CD4-positive, alpha-beta T cell (primary cell): ENCODE measurements at regions of chr1 and their contacts with region 1.

Region 1: DNA sequence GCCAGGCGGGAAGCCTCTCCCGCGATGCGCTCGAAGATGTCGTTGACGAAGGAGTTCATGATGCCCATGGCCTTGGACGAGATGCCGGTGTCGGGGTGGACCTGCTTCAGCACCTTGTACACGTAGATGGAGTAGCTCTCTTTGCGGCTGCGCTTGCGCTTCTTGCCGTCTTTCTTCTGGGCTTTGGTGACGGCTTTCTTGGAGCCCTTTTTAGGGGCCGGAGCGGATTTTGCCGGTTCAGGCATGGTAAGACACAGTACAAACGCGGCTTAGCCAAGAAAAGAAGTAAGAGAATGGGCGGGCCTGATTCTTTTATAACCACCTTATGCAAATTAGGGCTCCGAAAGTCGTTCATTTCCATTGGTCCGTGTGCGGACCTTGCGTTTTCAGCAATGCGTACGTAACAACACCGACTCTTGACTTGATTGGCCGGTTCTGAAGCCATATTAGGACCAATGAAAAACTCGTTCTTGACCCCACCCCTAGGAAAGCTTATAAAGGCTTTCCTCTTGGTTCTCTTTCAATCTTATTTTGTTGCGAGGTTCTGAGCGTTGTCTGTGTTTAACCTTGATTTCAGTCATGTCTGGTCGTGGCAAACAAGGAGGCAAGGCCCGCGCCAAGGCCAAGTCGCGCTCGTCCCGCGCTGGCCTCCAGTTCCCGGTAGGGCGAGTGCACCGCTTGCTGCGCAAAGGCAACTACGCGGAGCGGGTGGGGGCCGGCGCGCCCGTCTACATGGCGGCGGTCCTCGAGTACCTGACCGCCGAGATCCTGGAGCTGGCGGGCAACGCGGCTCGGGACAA is 12.8 kb upstream of the BOLA1 start:
- DNase-seq: peak; percentile 67 to 98 (median 82)
- ATAC-seq: peak; percentile 65
- H3K4me3 ChIP-seq: peak overlapping the region; percentile 87
- H3K4me3 Mint-ChIP-seq: no peak overlapping the region
- H3K27ac ChIP-seq: peak overlapping the region; percentile 91 to 96
- H3K27ac Mint-ChIP-seq: no peak overlapping the region
- H3K4me1 ChIP-seq: peaks cover 31% of the 10 kb centered on the region
- H3K4me1 Mint-ChIP-seq: peaks cover 10% of the 10 kb centered on the region
- H3K27me3 ChIP-seq: no peaks in the 10 kb centered on the region
- H3K27me3 Mint-ChIP-seq: no peaks in the 10 kb centered on the region
- CTCF ChIP-seq: no peak

Region 2: GRCh38 chr1:149849947-149850360 is 36.6 kb before region 1 on chr1:
- CTCF ChIA-PET with region 1: interaction called, 7 read pairs
- POLR2A ChIA-PET with region 1: interaction called, 259 read pairs
- intact Hi-C with region 1: no loop called
- DNase-seq: peak in 3 of 14 experiments; percentile 38 to 59 (median 38)
- ATAC-seq: no peak
- H3K4me3 ChIP-seq: peak overlapping the region; percentile 73
- H3K4me3 Mint-ChIP-seq: peak overlapping the region; percentile 87
- H3K27ac ChIP-seq: peak overlapping the region; percentile 47 to 83
- H3K27ac Mint-ChIP-seq: peak overlapping the region; percentile 91
- H3K4me1 ChIP-seq: peaks cover 25% of the 10 kb centered on the region
- H3K4me1 Mint-ChIP-seq: peaks cover 52% of the 10 kb centered on the region
- H3K27me3 ChIP-seq: no peaks in the 10 kb centered on the region
- H3K27me3 Mint-ChIP-seq: no peaks in the 10 kb centered on the region
- CTCF ChIP-seq: no peak

Region 3: GRCh38 chr1:149942207-149942606 is 55.6 kb after region 1 on chr1:
- CTCF ChIA-PET with region 1: no interaction called
- POLR2A ChIA-PET with region 1: interaction called, 14 read pairs
- intact Hi-C with region 1: no loop called
- DNase-seq: no peak
- ATAC-seq: no peak
- H3K4me3 ChIP-seq: no peak overlapping the region
- H3K4me3 Mint-ChIP-seq: no peak overlapping the region
- H3K27ac ChIP-seq: no peak overlapping the region
- H3K27ac Mint-ChIP-seq: no peak overlapping the region
- H3K4me1 ChIP-seq: peaks cover 19% of the 10 kb centered on the region
- H3K4me1 Mint-ChIP-seq: peaks cover 16% of the 10 kb centered on the region
- H3K27me3 ChIP-seq: no peaks in the 10 kb centered on the region
- H3K27me3 Mint-ChIP-seq: no peaks in the 10 kb centered on the region
- CTCF ChIP-seq: no peak

Region 4: DNA sequence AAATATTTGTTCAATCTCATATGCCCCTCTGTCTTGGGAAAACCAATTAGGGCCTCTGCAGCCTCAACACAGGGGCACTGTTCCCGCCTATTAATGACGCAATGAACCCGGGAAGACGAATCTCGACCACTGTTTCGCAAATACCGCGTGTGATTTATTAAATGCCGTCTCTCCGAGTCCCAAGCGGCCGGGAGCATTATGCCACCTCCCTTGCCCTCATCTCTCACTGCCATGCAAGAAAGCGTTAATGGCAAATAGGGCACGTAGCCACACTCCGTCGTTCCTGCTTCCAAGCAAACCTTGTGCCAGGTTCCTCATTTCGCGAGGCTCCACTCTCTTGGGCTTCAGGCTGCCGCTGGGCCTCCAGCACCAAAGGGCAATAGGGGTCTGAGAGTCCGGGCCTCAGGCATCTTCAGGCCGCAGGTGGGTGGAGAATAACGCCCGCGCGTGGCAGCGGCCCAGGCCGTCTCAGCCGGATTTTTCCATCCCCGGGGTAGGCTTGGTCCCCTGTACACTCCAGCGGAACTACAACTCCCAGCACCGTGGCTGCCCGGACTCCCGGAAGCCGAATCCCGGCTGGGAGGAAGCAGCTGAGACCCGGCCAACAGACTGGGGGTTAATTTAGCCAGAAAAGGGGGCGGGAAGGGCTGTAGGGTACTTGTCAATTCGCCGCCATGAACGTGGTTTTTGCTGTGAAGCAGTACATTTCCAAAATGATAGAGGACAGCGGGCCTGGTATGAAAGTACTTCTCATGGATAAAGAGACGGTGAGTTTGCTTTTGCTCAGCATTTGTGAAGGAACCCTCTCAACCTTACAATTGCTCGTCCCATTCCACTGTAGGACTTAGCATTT is 180.8 kb after region 1 on chr1 and contains the start of gene VPS45:
- CTCF ChIA-PET with region 1: no interaction called
- POLR2A ChIA-PET with region 1: interaction called, 36 read pairs
- intact Hi-C with region 1: no loop called
- DNase-seq: peak; percentile 54 to 89 (median 72)
- ATAC-seq: peak; percentile 91
- H3K4me3 ChIP-seq: peak within 1 kb of the TSS; percentile 79
- H3K4me3 Mint-ChIP-seq: peak within 1 kb of the TSS; percentile 96
- H3K27ac ChIP-seq: peak within 1 kb of the TSS; percentile 31 to 59
- H3K27ac Mint-ChIP-seq: peak within 1 kb of the TSS; percentile 83
- H3K4me1 ChIP-seq: peaks cover 6% of the 10 kb centered on the region
- H3K4me1 Mint-ChIP-seq: peaks cover 44% of the 10 kb centered on the region
- H3K27me3 ChIP-seq: no peaks in the 10 kb centered on the region
- H3K27me3 Mint-ChIP-seq: no peaks in the 10 kb centered on the region
- CTCF ChIP-seq: no peak
- total RNA-seq, gene VPS45: 9.6 to 10.7 TPM

Region 5: DNA sequence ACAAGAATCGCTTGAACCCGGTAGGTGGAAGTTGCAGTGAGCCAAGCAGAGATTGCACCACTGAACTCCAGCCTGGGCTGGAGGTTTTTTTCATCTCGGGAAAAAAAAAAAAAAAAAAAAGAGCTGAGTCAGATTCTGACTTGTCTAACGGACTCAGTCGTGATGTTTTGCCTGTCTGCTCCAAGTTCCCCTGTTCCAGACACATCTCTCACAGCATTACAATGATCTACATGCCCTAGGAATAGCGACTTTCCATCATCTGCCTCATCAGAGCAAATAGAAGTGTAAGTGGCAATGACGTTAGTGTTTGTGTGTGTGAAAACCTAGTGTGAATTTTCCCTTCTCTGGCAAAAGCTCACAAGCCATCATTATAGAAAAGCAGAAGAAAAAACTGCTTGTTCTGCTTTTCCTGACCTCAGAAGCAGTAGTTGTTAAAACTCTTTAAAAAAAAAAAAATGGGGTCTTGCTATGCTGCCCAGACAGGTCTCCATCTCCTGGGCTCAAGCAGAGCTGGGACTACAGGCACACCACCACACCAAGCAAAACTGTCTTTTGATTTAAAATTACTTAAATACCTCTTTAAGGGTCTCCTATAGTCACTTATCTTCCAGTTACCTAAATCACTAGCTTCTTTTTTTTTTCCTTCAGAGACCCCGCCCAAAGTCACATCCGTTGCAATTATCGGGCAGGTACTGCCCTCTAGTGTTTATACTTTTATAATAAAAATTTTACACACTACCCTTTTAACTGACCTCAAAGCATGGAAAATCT is 300.4 kb after region 1 on chr1:
- CTCF ChIA-PET with region 1: interaction called, 5 read pairs
- POLR2A ChIA-PET with region 1: interaction called, 36 read pairs
- intact Hi-C with region 1: no loop called
- DNase-seq: peak in 7 of 14 experiments; percentile 6 to 79 (median 49)
- ATAC-seq: peak; percentile 84
- H3K4me3 ChIP-seq: no peak overlapping the region
- H3K4me3 Mint-ChIP-seq: no peak overlapping the region
- H3K27ac ChIP-seq: no peak overlapping the region
- H3K27ac Mint-ChIP-seq: no peak overlapping the region
- H3K4me1 ChIP-seq: peaks cover 10% of the 10 kb centered on the region
- H3K4me1 Mint-ChIP-seq: peaks cover 9% of the 10 kb centered on the region
- H3K27me3 ChIP-seq: peaks cover 0 to 3% of the 10 kb centered on the region in 2 experiments
- H3K27me3 Mint-ChIP-seq: peaks cover 4% of the 10 kb centered on the region
- CTCF ChIP-seq: peak; percentile 86

Region 6: DNA sequence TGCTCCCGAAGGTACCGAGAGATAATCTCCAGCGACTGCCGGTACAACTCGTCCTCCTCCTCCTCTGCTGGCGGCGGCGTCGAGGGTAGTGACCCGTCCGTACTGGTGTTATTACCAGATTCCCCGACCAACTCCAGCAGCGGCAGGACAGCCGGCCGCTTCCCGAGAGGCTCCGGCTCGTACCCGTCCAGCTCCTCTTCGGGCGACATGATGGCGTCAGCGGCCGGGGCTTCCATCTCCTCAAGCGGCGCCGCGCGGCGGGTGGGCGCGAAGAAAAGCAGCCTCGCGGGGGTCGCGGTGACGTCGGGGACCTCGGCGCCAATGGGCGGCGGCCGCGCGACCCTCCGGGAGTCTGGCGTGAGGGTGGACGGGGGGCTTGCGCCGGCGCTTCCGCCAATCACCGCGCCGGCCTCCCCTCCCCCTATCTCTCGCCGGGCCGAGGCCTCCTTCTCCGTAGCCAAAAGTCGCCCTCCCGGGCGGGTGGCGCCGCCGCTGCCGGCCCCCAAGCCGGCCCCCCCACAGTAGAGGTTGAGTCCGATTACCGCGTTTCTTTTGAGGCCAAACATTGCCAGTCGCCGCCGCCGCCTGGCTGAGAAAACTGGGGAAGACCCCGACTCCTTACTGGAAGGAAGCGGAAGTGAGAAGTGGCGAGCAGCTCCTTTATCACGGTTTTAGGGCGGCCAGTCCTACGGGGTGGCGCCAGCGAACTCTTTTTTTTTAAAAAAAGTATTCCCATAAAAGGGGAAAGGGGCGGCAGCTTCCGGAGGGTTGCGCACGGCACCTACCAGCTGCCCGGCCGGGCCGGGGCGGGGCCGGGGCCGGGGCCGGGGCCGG is 692.6 kb after region 1 on chr1 and contains the start of gene MCL1:
- CTCF ChIA-PET with region 1: no interaction called
- POLR2A ChIA-PET with region 1: interaction called, 15 read pairs
- intact Hi-C with region 1: no loop called
- DNase-seq: peak; percentile 70 to 95 (median 82)
- ATAC-seq: peak; percentile 63
- H3K4me3 ChIP-seq: peak within 1 kb of the TSS; percentile 84
- H3K4me3 Mint-ChIP-seq: peak within 1 kb of the TSS; percentile 99
- H3K27ac ChIP-seq: peak within 1 kb of the TSS; percentile 93 to 97
- H3K27ac Mint-ChIP-seq: peak within 1 kb of the TSS; percentile 98
- H3K4me1 ChIP-seq: peaks cover 22% of the 10 kb centered on the region
- H3K4me1 Mint-ChIP-seq: peaks cover 41% of the 10 kb centered on the region
- H3K27me3 ChIP-seq: no peaks in the 10 kb centered on the region
- H3K27me3 Mint-ChIP-seq: no peaks in the 10 kb centered on the region
- CTCF ChIP-seq: no peak
- total RNA-seq, gene MCL1: 737 to 747 TPM